H1 (cell line): ENCODE measurements at regions of chr3 and their contacts with region 1.

Region 1: GRCh38 chr3:171113714-171114113 is 87.2 kb upstream of the SLC2A2 start:
- DNase-seq: no peak
- H3K4me3 ChIP-seq: no peak overlapping the region
- H3K27ac ChIP-seq: no peak overlapping the region
- H3K4me1 ChIP-seq: peaks cover 0 to 9% (median 4%) of the 10 kb centered on the region in 4 experiments; a peak in 4 of 7 replicates
- H3K27me3 ChIP-seq: no peaks in the 10 kb centered on the region
- CTCF ChIP-seq: peak; percentile 46 to 75 (median 71)
- EP300 ChIP-seq: no peak
- POLR2A ChIP-seq: no peak
- RAD21 ChIP-seq: peak; percentile 55 to 61

Region 2: DNA sequence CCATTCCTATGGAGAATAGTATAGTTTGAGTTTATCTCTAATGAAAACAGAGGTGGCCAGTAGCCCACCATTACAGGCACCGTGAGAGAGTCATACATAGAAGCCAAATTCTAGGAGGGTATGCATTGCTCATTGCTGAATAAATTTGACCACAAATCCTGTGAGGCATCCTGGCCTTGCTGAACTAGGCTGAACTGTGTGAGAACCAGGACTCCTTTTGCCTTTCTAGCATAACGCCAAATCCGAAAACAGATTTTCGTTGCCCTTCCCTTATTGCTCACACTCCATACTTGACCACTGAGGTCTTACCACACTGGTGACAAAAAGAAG is 137.6 kb before region 1 on chr3:
- CTCF ChIA-PET with region 1: no interaction called
- POLR2A ChIA-PET with region 1: no interaction called
- DNase-seq: no peak
- H3K4me3 ChIP-seq: no peak overlapping the region
- H3K27ac ChIP-seq: no peak overlapping the region
- H3K4me1 ChIP-seq: no peaks in the 10 kb centered on the region
- H3K27me3 ChIP-seq: no peaks in the 10 kb centered on the region
- CTCF ChIP-seq: no peak
- EP300 ChIP-seq: no peak
- POLR2A ChIP-seq: no peak
- RAD21 ChIP-seq: no peak

Region 3: GRCh38 chr3:170989100-170989648 is 124.5 kb before region 1 on chr3:
- CTCF ChIA-PET with region 1: no interaction called
- POLR2A ChIA-PET with region 1: no interaction called
- DNase-seq: no peak
- H3K4me3 ChIP-seq: no peak overlapping the region
- H3K27ac ChIP-seq: no peak overlapping the region
- H3K4me1 ChIP-seq: no peaks in the 10 kb centered on the region
- H3K27me3 ChIP-seq: no peaks in the 10 kb centered on the region
- CTCF ChIP-seq: no peak
- EP300 ChIP-seq: no peak
- POLR2A ChIP-seq: no peak
- RAD21 ChIP-seq: no peak

Region 4: DNA sequence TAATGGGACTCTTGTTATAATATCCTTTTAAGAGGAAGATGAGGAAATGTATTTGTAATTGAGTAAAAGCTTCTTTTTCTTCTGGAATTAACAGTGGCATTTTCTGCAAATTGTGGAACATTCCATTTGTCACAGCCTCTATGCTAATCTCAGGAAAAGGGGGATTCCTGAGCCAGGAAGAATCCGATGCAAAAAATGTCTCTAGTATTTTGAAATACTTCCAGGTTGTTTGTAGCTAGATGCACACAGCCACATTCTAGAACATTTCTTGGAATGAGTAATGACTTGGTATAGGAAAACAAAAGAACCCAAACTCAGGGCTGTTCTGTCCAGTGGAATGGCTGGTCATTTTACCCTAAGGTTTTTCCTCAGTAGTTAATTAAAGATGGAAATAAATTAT is 11.3 kb after region 1 on chr3:
- CTCF ChIA-PET with region 1: interaction called, 15 read pairs
- POLR2A ChIA-PET with region 1: interaction called, 3 read pairs
- DNase-seq: no peak
- H3K4me3 ChIP-seq: no peak overlapping the region
- H3K27ac ChIP-seq: no peak overlapping the region
- H3K4me1 ChIP-seq: peaks cover 0 to 2% (median 0%) of the 10 kb centered on the region in 4 experiments; a peak in 1 of 7 replicates
- H3K27me3 ChIP-seq: no peaks in the 10 kb centered on the region
- CTCF ChIP-seq: no peak
- EP300 ChIP-seq: no peak
- POLR2A ChIP-seq: no peak
- RAD21 ChIP-seq: no peak